HEK293 (cell line): ENCODE measurements at regions of chr1 and their contacts with region 1.

Region 1: GRCh38 chr1:204560590-204561150 is 44.5 kb downstream of the MDM4 start:
- H3K4me3 ChIP-seq: no peak overlapping the region
- H3K27ac ChIP-seq: no peak overlapping the region
- H3K4me1 ChIP-seq: no peaks in the 10 kb centered on the region
- CTCF ChIP-seq: no peak

Region 2: DNA sequence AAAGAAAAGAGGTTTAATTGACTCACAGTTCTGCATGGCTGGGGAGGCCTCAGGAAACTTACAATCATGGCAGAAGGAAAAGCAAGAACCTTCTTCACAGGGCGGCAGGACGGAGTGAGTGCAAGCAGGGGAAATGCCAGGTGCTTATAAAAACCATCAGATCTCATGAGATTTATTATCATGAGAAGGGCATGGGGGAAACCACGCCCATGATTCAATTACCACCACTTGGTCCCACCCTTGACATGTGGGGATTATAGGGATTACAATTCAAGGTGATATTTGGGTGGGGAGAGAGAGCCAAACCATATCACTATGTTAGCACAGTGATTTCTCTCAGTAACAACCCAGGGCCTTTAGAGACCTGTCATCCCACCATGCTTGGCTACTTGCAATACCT is 85.0 kb after region 1 on chr1:
- CTCF ChIA-PET with region 1: no interaction called
- POLR2A ChIA-PET with region 1: no interaction called
- H3K4me3 ChIP-seq: no peak overlapping the region
- H3K27ac ChIP-seq: no peak overlapping the region
- H3K4me1 ChIP-seq: no peaks in the 10 kb centered on the region
- CTCF ChIP-seq: no peak

Region 3: DNA sequence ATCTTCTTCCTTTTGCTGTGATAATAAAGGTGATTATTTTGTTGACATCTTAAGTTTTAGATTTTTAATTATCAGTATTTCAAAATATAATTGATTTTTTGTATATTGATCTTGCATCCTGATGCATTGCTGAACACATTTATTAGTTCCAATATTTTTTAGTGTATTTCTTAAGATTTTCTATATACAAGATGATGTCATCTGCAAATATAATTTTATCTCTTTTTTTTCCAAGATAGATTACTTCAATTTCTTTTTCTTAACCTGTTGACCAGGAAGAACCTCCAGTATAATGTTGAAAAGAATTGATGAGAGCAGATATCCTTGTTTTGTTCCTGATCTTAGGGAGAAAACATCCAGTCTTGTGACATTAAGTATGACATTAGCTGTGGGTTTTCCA is 179.7 kb after region 1 on chr1:
- CTCF ChIA-PET with region 1: no interaction called
- POLR2A ChIA-PET with region 1: no interaction called
- H3K4me3 ChIP-seq: no peak overlapping the region
- H3K27ac ChIP-seq: no peak overlapping the region
- H3K4me1 ChIP-seq: no peaks in the 10 kb centered on the region
- CTCF ChIP-seq: no peak

Region 4: DNA sequence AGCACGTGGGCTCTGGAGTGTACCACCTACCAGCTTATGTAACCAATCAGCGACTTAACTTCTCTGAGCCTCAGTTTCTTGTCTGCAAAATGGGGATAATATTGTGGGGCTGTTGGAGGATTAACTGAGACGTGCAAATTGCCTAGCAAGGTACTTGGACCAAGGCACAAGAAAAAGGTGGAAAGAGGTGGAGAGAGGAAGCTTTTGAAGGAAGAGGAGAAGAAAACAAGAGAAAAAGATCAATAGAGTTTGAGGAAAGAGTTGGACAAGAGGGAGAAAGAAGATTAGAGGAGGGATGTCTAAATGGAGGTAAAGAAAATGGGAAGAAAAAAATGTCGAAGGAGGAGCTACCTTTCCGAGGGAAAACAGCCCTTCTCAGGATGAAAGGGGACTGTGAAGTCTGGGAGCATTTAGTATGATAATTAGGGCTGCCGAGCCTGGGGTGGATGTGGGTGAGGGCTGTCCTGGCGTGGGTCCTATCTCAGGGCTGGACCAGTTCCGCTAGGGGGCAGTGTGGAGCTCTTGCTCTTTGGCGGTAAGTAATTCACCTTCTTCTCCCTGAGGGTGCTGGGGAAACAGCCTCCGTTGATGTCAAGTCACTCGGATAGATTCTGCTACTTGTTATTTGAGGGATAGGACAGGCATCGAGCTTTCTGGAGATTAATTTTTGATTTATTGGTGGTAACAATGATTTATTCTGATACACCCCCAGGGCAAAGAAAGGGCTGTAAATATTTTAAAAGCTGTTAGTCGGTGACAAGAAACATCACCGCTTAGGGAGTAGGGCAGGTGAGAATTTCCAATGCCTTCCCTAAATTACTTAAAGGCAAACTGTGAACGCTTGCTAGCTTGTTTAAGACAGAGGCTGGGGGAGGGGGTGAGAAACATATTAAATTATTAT is 231.0 kb after region 1 on chr1:
- CTCF ChIA-PET with region 1: interaction called, 12 read pairs
- POLR2A ChIA-PET with region 1: no interaction called
- H3K4me3 ChIP-seq: no peak overlapping the region
- H3K27ac ChIP-seq: no peak overlapping the region
- H3K4me1 ChIP-seq: no peaks in the 10 kb centered on the region
- CTCF ChIP-seq: peak; percentile 42; the same call in 1 of the 2 replicates